ENCODE measurements at regions of chr14 and their contacts with region 1.

Region 1: GRCh38 chr14:77067632-77068514 is 30.2 kb upstream of the CIPC start:
- DNase-seq: peak; percentile 63
- H3K4me3 ChIP-seq: no peak overlapping the region
- H3K27ac ChIP-seq: peak overlapping the region; percentile 75
- H3K4me1 ChIP-seq: peaks cover 56% of the 10 kb centered on the region
- H3K27me3 ChIP-seq: no peaks in the 10 kb centered on the region
- CTCF ChIP-seq: peak; percentile 92

Region 2: DNA sequence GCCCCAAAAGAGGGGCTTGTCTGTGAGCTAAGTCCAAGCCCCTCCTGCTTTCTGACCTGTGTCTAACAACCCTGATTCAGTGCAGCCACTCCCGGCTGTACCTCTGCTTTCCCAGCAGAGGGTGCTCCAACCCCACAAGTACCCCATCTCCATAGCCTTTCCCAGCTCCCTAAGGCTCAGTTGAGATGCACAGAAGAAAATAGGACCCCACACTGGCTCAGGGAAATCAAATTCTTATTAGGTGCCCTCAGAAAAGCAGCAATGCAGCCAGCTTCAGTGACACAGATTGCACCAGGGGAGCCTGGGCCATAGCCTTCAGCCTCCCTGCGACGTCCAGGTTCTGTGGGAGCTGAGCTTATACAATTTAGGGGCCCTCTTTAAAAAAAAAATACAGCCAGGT is 191.8 kb before region 1 on chr14:
- intact Hi-C with region 1: loop called (anchors 5 kb)
- DNase-seq: peak; percentile 43
- H3K4me3 ChIP-seq: no peak overlapping the region
- H3K27ac ChIP-seq: no peak overlapping the region
- H3K4me1 ChIP-seq: no peaks in the 10 kb centered on the region
- H3K27me3 ChIP-seq: no peaks in the 10 kb centered on the region
- CTCF ChIP-seq: peak; percentile 98

Region 3: GRCh38 chr14:76910371-76910890 is 157.4 kb before region 1 on chr14:
- intact Hi-C with region 1: loop called (anchors 5 kb)
- DNase-seq: no peak
- H3K4me3 ChIP-seq: no peak overlapping the region
- H3K27ac ChIP-seq: no peak overlapping the region
- H3K4me1 ChIP-seq: peaks cover 16% of the 10 kb centered on the region
- H3K27me3 ChIP-seq: no peaks in the 10 kb centered on the region
- CTCF ChIP-seq: no peak

Region 4: DNA sequence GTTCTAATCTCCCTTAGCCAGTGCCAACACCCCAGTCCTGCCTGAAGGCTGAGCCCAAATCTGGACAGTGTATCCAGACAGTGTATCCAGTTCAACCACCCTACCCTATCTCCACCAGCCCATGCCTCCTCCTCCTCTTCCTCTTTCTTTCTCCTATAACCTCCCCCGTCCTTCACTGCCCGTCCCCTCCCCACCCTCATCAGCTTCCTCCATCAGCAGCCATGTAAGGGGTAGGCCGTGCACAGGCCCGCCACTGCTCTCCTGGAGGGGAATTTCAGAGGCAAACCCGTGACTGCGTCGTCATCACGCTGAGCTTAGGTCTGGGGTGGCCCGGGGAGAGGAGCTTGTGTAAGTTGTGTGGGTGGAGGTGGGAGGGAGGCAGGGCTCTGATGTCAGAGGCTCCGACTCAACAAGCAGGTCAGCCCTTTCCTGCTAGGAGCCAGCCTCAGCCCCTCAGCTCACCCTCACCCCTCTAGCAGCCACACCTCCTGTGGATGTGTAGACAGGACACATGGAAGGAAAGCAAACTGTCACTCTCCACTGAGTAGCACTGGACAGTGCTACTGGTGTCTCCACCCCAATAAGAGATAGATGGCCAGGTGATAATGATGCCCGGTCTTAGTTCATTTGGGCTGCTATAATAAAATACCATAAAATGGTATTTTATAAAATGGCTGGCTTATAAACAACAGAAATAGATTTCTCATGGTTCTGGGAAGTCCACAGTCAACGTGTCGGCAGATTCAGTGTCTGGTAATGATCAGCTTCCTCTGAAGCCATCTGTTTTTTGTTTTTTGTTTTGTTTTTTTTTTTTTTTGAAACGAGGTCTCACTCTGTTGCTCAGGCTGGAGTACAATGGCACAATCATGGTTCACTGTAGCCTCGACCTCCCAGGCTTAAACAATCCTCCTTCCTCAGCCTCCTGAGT is 89.8 kb before region 1 on chr14:
- intact Hi-C with region 1: no loop called
- DNase-seq: peak; percentile 57
- H3K4me3 ChIP-seq: no peak overlapping the region
- H3K27ac ChIP-seq: no peak overlapping the region
- H3K4me1 ChIP-seq: no peaks in the 10 kb centered on the region
- H3K27me3 ChIP-seq: no peaks in the 10 kb centered on the region
- CTCF ChIP-seq: no peak

Region 5: DNA sequence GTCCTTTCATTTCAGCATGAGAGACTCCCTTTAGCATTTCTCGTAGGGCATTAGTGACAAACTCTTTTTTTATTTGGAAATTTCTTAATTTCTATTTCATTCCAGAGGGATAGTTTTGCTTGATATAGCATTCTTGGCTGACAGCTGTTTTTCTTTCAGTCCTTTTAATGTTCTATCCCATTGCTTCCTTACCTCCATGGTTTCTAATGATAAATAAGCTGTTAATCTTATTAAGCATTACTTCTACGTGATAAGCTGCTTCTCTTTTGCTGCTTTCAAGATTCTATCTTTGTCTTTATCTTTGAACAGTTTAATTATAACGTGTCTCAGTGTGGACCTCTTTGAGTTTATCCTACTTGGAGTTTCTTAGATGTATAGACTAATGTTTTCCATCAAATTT is 102.2 kb after region 1 on chr14:
- intact Hi-C with region 1: no loop called
- DNase-seq: no peak
- H3K4me3 ChIP-seq: no peak overlapping the region
- H3K27ac ChIP-seq: no peak overlapping the region
- H3K4me1 ChIP-seq: no peaks in the 10 kb centered on the region
- H3K27me3 ChIP-seq: peaks cover 13% of the 10 kb centered on the region
- CTCF ChIP-seq: no peak

Region 6: DNA sequence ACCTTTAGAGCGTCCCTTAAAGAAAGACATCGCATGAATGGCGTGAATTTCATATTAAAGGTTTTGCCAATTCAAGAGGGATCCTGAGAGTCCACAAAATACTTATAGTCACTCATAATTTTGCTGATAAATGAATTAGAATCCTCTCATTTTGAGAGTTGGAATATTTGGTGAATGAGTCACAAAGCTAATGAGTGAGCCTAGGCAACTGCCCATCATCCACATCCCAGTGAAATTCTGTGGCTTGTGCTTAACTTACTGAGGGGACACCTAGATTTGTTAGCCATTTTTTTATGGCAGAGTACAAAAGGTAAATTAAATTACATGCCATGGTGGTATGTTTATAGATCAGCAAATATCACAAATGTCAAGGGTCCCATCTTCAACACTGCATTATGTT is 368.2 kb after region 1 on chr14:
- intact Hi-C with region 1: no loop called
- DNase-seq: no peak
- H3K4me3 ChIP-seq: no peak overlapping the region
- H3K27ac ChIP-seq: no peak overlapping the region
- H3K4me1 ChIP-seq: no peaks in the 10 kb centered on the region
- H3K27me3 ChIP-seq: no peaks in the 10 kb centered on the region
- CTCF ChIP-seq: no peak